ENCODE measurements at regions of chr2 and their contacts with region 1.

Region 1: DNA sequence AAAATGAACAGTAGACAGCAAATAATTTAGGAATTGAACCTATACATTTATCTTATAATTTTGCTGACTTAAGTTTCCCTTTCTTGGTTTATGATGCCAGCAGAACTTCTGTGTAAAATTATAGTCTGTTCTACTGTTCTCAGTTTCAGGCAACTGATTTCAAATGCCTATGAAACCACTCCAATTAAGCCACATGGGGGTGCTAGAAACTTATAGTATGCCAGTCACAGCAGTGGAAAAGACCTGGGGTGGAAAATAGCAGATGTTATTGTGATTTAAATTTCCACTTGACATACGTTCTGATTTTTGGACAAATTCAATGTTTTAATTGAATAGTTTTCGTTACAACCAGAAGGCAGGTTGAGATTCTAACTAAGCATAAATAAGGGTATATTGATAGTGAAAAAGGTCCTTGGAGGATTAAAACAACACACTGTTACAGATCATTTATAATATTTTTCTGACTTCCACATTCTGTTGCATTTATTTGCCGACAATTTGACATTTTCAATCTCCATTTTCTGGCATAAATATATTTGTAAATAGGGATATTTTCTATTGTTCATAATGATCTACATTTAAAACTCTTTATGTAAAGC is 61.4 kb downstream of the CPS1 start:
- DNase-seq: peak in 1 of 2 experiments; percentile 52
- H3K4me3 ChIP-seq: no peak overlapping the region
- H3K4me3 Mint-ChIP-seq: no peak overlapping the region
- H3K27ac Mint-ChIP-seq: no peak overlapping the region
- H3K4me1 ChIP-seq: no peaks in the 10 kb centered on the region
- H3K4me1 Mint-ChIP-seq: no peaks in the 10 kb centered on the region
- H3K27me3 ChIP-seq: no peaks in the 10 kb centered on the region
- H3K27me3 Mint-ChIP-seq: no peaks in the 10 kb centered on the region
- CTCF ChIP-seq: peak; percentile 60 to 72

Region 2: GRCh38 chr2:210442878-210443277 is 175.0 kb before region 1 on chr2:
- CTCF ChIA-PET with region 1: no interaction called
- POLR2A ChIA-PET with region 1: no interaction called
- intact Hi-C with region 1: no loop called
- DNase-seq: no peak
- H3K4me3 ChIP-seq: no peak overlapping the region
- H3K4me3 Mint-ChIP-seq: no peak overlapping the region
- H3K27ac Mint-ChIP-seq: no peak overlapping the region
- H3K4me1 ChIP-seq: no peaks in the 10 kb centered on the region
- H3K4me1 Mint-ChIP-seq: no peaks in the 10 kb centered on the region
- H3K27me3 ChIP-seq: no peaks in the 10 kb centered on the region
- H3K27me3 Mint-ChIP-seq: no peaks in the 10 kb centered on the region
- CTCF ChIP-seq: no peak

Region 3: GRCh38 chr2:210630873-210631560 is 13.2 kb after region 1 on chr2:
- CTCF ChIA-PET with region 1: no interaction called
- POLR2A ChIA-PET with region 1: no interaction called
- intact Hi-C with region 1: no loop called
- DNase-seq: no peak
- H3K4me3 ChIP-seq: no peak overlapping the region
- H3K4me3 Mint-ChIP-seq: no peak overlapping the region
- H3K27ac Mint-ChIP-seq: no peak overlapping the region
- H3K4me1 ChIP-seq: no peaks in the 10 kb centered on the region
- H3K4me1 Mint-ChIP-seq: no peaks in the 10 kb centered on the region
- H3K27me3 ChIP-seq: no peaks in the 10 kb centered on the region
- H3K27me3 Mint-ChIP-seq: peaks cover 2% of the 10 kb centered on the region
- CTCF ChIP-seq: no peak

Region 4: DNA sequence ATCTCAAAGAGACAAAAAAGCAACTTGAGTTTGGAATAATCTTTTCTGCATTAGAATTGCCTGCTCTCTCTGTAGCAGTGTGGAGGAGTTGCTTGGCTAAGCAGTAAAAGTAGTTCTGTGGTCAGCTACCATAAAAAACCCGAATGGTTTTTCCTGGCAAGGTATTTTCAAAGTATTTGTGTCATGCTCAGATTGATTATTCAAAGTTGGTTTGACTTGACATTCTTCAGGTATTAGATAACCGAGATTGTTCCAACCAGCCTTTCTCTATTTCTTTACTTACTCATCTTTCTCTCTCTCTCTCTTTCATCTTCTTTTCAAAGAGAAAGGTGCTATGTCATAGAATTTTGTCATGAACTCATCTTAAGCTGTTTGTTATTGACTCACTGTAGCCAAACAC is 343.4 kb after region 1 on chr2:
- CTCF ChIA-PET with region 1: no interaction called
- POLR2A ChIA-PET with region 1: no interaction called
- intact Hi-C with region 1: no loop called
- DNase-seq: no peak
- H3K4me3 ChIP-seq: no peak overlapping the region
- H3K4me3 Mint-ChIP-seq: no peak overlapping the region
- H3K27ac Mint-ChIP-seq: no peak overlapping the region
- H3K4me1 ChIP-seq: no peaks in the 10 kb centered on the region
- H3K4me1 Mint-ChIP-seq: no peaks in the 10 kb centered on the region
- H3K27me3 ChIP-seq: no peaks in the 10 kb centered on the region
- H3K27me3 Mint-ChIP-seq: no peaks in the 10 kb centered on the region
- CTCF ChIP-seq: no peak

Region 5: DNA sequence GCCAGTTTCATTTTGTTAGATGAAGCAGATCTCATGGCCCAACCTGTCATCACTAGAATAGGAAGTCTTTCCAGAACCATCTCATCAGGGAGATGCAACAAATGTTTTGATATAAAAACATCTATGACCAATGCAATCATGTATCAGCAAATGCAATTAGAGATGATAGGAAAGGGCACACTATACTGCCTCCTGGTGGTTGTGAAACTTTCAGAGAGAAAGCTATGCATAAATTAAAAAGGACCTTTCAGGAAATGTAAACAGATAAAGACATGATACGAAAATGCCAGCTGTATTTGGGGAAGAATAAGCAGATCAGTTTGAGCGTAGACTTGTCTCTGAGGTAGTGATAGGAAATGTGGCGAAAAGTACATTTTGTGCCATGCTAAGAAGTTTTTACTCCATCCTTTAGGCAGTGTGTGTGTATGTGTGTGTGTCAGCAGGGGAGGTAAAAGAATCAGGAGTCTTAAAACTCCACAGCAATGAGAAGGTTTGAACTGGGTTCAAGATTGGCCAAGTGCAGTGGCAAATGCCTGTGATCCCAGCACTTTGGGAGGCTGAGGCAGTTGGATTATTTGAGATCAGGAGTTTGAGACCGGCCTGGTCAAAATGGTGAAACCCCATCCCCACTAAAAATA is 417.8 kb after region 1 on chr2:
- CTCF ChIA-PET with region 1: no interaction called
- POLR2A ChIA-PET with region 1: no interaction called
- intact Hi-C with region 1: loop called (anchors 1 kb)
- DNase-seq: peak in 1 of 2 experiments; percentile 19
- H3K4me3 ChIP-seq: no peak overlapping the region
- H3K4me3 Mint-ChIP-seq: no peak overlapping the region
- H3K27ac Mint-ChIP-seq: no peak overlapping the region
- H3K4me1 ChIP-seq: no peaks in the 10 kb centered on the region
- H3K4me1 Mint-ChIP-seq: no peaks in the 10 kb centered on the region
- H3K27me3 ChIP-seq: no peaks in the 10 kb centered on the region
- H3K27me3 Mint-ChIP-seq: peaks cover 3% of the 10 kb centered on the region
- CTCF ChIP-seq: peak in 1 of 2 experiments; percentile 39

Region 6: GRCh38 chr2:211157856-211158463 is 540.1 kb after region 1 on chr2:
- CTCF ChIA-PET with region 1: no interaction called
- POLR2A ChIA-PET with region 1: no interaction called
- intact Hi-C with region 1: loop called (anchors 1 kb)
- DNase-seq: peak; percentile 71 to 75
- H3K4me3 ChIP-seq: no peak overlapping the region
- H3K4me3 Mint-ChIP-seq: no peak overlapping the region
- H3K27ac Mint-ChIP-seq: no peak overlapping the region
- H3K4me1 ChIP-seq: no peaks in the 10 kb centered on the region
- H3K4me1 Mint-ChIP-seq: no peaks in the 10 kb centered on the region
- H3K27me3 ChIP-seq: no peaks in the 10 kb centered on the region
- H3K27me3 Mint-ChIP-seq: no peaks in the 10 kb centered on the region
- CTCF ChIP-seq: peak; percentile 76 to 84

Measured in Caco-2 (cell line).